ENCODE measurements at regions of chr1 and their contacts with region 1.

Region 1: GRCh38 chr1:164786980-164787833 is 228.2 kb downstream of the PBX1 start:
- DNase-seq: peak; percentile 66 to 78
- H3K4me3 ChIP-seq: no peak overlapping the region
- H3K27ac ChIP-seq: peak overlapping the region; percentile 54
- H3K4me1 ChIP-seq: peaks cover 22% of the 10 kb centered on the region
- H3K27me3 ChIP-seq: no peaks in the 10 kb centered on the region
- CTCF ChIP-seq: peak; percentile 95

Region 2: DNA sequence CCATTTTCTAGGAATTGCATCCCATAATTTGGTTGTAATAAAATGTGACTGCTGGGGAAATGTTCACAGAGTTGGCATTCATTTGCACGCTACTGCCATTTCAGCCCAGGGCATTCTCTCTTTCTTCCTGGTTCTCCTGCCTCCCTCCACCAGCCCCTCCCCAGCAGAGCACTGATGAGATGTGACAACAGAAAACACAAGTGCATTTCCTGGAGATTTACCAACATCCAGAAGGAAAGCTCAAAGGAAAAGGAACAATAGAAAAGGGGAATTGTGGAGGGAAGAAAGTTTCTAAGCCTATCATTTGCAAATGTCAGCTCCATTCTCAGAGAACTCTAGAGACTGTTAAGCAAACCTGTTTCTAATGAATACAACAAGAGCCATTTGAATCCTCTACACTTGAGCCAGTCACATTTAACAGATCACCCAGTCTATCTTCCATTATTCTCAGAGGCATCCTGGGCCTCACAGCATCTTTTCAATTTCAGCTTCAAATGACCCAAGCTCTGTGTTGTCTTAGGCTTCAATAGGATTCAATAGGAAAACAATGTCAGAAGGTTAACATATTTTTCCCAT is 623.8 kb before region 1 on chr1:
- CTCF ChIA-PET with region 1: interaction called, 7 read pairs
- POLR2A ChIA-PET with region 1: no interaction called
- intact Hi-C with region 1: loop called (anchors 1 kb)
- DNase-seq: no peak
- H3K4me3 ChIP-seq: no peak overlapping the region
- H3K27ac ChIP-seq: no peak overlapping the region
- H3K4me1 ChIP-seq: no peaks in the 10 kb centered on the region
- H3K27me3 ChIP-seq: no peaks in the 10 kb centered on the region
- CTCF ChIP-seq: no peak

Region 3: DNA sequence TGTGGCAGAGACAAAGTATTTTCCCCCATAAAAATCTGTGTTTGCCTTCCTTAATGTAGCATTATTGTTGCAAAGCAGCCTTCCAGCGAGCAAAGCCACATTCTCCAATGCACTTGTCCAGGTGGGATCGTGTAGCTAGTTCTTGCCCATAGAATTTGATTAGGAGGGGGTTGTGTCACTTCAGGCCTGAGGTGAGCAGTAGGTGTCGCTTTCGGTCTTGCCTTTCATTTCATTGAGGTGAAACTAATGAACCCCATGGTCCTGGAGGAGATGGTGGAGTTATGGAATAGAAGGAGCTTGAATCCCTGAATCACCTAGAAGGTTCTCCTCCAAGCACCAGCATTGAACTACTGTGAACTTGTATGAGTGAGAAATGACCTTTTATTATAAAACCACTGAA is 547.1 kb before region 1 on chr1:
- CTCF ChIA-PET with region 1: interaction called, 5 read pairs
- POLR2A ChIA-PET with region 1: no interaction called
- intact Hi-C with region 1: loop called (anchors 2 kb)
- DNase-seq: peak in 1 of 2 experiments; percentile 5
- H3K4me3 ChIP-seq: no peak overlapping the region
- H3K27ac ChIP-seq: no peak overlapping the region
- H3K4me1 ChIP-seq: no peaks in the 10 kb centered on the region
- H3K27me3 ChIP-seq: no peaks in the 10 kb centered on the region
- CTCF ChIP-seq: no peak

Region 4: DNA sequence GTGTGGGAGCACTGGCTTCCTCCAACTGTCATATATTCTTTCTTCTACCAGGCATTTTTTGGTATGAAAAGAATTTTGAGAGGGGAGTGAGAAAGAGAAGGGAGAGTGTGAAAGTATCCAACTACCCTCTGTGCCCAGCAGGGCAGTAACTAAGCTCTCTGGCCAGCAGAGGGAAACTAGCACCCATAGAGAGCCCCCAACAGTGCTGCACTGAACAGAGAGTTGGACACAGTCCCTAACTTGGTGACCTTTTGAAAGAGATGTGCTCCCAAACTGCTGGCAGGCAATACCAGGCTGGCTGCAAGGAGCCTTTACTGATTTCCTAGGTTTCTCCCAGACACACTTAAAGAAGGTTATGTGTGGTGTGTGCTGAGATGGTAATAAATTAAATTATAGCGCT is 347.0 kb before region 1 on chr1:
- CTCF ChIA-PET with region 1: no interaction called
- POLR2A ChIA-PET with region 1: no interaction called
- intact Hi-C with region 1: loop called (anchors 5 kb)
- DNase-seq: peak in 1 of 2 experiments; percentile 15
- H3K4me3 ChIP-seq: no peak overlapping the region
- H3K27ac ChIP-seq: no peak overlapping the region
- H3K4me1 ChIP-seq: no peaks in the 10 kb centered on the region
- H3K27me3 ChIP-seq: no peaks in the 10 kb centered on the region
- CTCF ChIP-seq: peak; percentile 27; the same call in 1 of the 2 replicates

Region 5: GRCh38 chr1:164611754-164612642 is 175.2 kb before region 1 on chr1:
- CTCF ChIA-PET with region 1: no interaction called
- POLR2A ChIA-PET with region 1: no interaction called
- intact Hi-C with region 1: loop called (anchors 1 kb)
- DNase-seq: peak; percentile 79 to 96
- H3K4me3 ChIP-seq: no peak overlapping the region; the same call in 1 of the 2 replicates
- H3K27ac ChIP-seq: peak overlapping the region; percentile 79
- H3K4me1 ChIP-seq: peaks cover 44% of the 10 kb centered on the region
- H3K27me3 ChIP-seq: no peaks in the 10 kb centered on the region
- CTCF ChIP-seq: no peak

Region 6: GRCh38 chr1:164855723-164856329 is 68.6 kb after region 1 on chr1:
- CTCF ChIA-PET with region 1: no interaction called
- POLR2A ChIA-PET with region 1: no interaction called
- intact Hi-C with region 1: no loop called
- DNase-seq: no peak
- H3K4me3 ChIP-seq: no peak overlapping the region
- H3K27ac ChIP-seq: no peak overlapping the region
- H3K4me1 ChIP-seq: no peaks in the 10 kb centered on the region
- H3K27me3 ChIP-seq: no peaks in the 10 kb centered on the region
- CTCF ChIP-seq: no peak

Measured in PC-9 (cell line).